H1 (cell line): ENCODE measurements at regions of chr5 and their contacts with region 1.

Region 1: GRCh38 chr5:150122158-150122510 is 33.5 kb downstream of the PDGFRB start:
- DNase-seq: peak in 1 of 2 experiments; percentile 67
- H3K4me3 ChIP-seq: no peak overlapping the region
- H3K27ac ChIP-seq: no peak overlapping the region
- H3K4me1 ChIP-seq: peaks cover 0 to 6% (median 2%) of the 10 kb centered on the region in 4 experiments; a peak in 3 of 7 replicates
- H3K27me3 ChIP-seq: no peaks in the 10 kb centered on the region
- CTCF ChIP-seq: peak in 2 of 3 experiments; percentile 74 to 78; a peak in 3 of 4 replicates
- EP300 ChIP-seq: no peak
- POLR2A ChIP-seq: no peak
- RAD21 ChIP-seq: peak; percentile 57 to 67

Region 2: DNA sequence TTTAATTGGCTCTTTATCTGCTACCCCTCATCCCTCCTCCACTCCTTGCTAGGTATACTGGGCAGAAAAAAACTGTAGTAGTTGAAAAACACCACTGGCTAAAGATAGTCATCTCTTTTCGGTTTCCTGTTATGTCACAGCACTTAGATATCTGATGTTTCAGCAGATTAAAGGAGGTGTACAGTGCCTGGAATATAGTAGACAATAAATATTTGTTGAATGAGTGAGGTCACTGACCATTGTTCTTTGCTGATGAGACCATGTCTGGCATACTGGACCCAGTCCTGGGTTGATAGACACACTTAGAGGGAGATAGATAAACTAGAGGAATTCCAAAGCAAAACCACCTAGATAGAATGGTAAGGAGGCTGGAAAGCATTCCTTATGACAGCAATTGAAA is 773.6 kb before region 1 on chr5:
- CTCF ChIA-PET with region 1: no interaction called
- POLR2A ChIA-PET with region 1: no interaction called
- DNase-seq: no peak
- H3K4me3 ChIP-seq: no peak overlapping the region
- H3K27ac ChIP-seq: no peak overlapping the region
- H3K4me1 ChIP-seq: peaks cover 0 to 5% (median 1%) of the 10 kb centered on the region in 4 experiments; a peak in 4 of 7 replicates
- H3K27me3 ChIP-seq: no peaks in the 10 kb centered on the region
- CTCF ChIP-seq: no peak
- EP300 ChIP-seq: no peak
- POLR2A ChIP-seq: no peak
- RAD21 ChIP-seq: no peak

Region 3: DNA sequence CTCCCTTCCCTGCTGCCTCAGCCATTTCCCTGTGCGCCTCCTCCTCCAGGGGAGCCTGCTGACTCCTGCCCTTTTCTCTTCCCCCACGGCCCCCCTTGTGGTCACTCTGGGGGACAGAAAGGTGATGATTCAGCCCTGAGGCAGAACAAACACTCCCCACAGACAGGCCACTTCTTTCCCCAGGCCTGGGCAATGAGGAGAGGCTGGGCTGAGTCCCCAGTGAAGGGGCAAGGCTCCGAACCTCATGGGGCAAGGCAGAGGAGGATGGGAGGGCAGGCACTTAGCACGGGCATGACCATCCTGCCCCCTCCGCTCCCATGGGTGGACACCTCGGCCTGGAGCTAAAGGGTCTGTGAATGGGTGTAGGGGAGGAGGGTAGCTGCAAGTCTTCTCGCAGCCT is 56.8 kb before region 1 on chr5:
- CTCF ChIA-PET with region 1: interaction called, 11 read pairs
- POLR2A ChIA-PET with region 1: no interaction called
- DNase-seq: no peak
- H3K4me3 ChIP-seq: no peak overlapping the region
- H3K27ac ChIP-seq: no peak overlapping the region; the same call in 1 of the 2 replicates
- H3K4me1 ChIP-seq: peaks cover 0 to 18% (median 4%) of the 10 kb centered on the region in 4 experiments; a peak in 5 of 7 replicates
- H3K27me3 ChIP-seq: peaks cover 0 to 2% (median 0%) of the 10 kb centered on the region in 4 experiments; a peak in 2 of 7 replicates
- CTCF ChIP-seq: 0 out of 4 replicates have a peak, but pooled peaks of 1 of the 3 experiments have one; percentile 7
- EP300 ChIP-seq: no peak
- POLR2A ChIP-seq: no peak
- RAD21 ChIP-seq: 0 out of 4 replicates have a peak, but pooled peaks of 1 of the 2 experiments have one; percentile 4

Region 4: GRCh38 chr5:150075871-150076288 is 46.3 kb before region 1 on chr5:
- CTCF ChIA-PET with region 1: interaction called, 13 read pairs
- POLR2A ChIA-PET with region 1: no interaction called
- DNase-seq: peak in 1 of 2 experiments; percentile 32
- H3K4me3 ChIP-seq: no peak overlapping the region
- H3K27ac ChIP-seq: no peak overlapping the region
- H3K4me1 ChIP-seq: no peaks in the 10 kb centered on the region
- H3K27me3 ChIP-seq: no peaks in the 10 kb centered on the region
- CTCF ChIP-seq: peak; percentile 7 to 33 (median 22); a peak in 3 of 4 replicates
- EP300 ChIP-seq: no peak
- POLR2A ChIP-seq: no peak
- RAD21 ChIP-seq: peak; percentile 14 to 35; a peak in 2 of 4 replicates

Region 5: GRCh38 chr5:150081541-150082283 is 40.4 kb before region 1 on chr5:
- CTCF ChIA-PET with region 1: interaction called, 12 read pairs
- POLR2A ChIA-PET with region 1: no interaction called
- DNase-seq: no peak
- H3K4me3 ChIP-seq: no peak overlapping the region
- H3K27ac ChIP-seq: no peak overlapping the region
- H3K4me1 ChIP-seq: peaks cover 0 to 6% (median 1%) of the 10 kb centered on the region in 4 experiments; a peak in 5 of 7 replicates
- H3K27me3 ChIP-seq: no peaks in the 10 kb centered on the region; a peak in 1 of 7 replicates
- CTCF ChIP-seq: no peak
- EP300 ChIP-seq: no peak
- POLR2A ChIP-seq: no peak
- RAD21 ChIP-seq: no peak

Region 6: GRCh38 chr5:150106674-150107426 is 15.3 kb before region 1 on chr5:
- CTCF ChIA-PET with region 1: interaction called, 28 read pairs
- POLR2A ChIA-PET with region 1: no interaction called
- DNase-seq: no peak
- H3K4me3 ChIP-seq: no peak overlapping the region
- H3K27ac ChIP-seq: no peak overlapping the region
- H3K4me1 ChIP-seq: no peaks in the 10 kb centered on the region
- H3K27me3 ChIP-seq: no peaks in the 10 kb centered on the region
- CTCF ChIP-seq: no peak
- EP300 ChIP-seq: no peak
- POLR2A ChIP-seq: no peak
- RAD21 ChIP-seq: no peak